A673 (cell line): ENCODE measurements at regions of chr6 and their contacts with region 1.

Region 1: DNA sequence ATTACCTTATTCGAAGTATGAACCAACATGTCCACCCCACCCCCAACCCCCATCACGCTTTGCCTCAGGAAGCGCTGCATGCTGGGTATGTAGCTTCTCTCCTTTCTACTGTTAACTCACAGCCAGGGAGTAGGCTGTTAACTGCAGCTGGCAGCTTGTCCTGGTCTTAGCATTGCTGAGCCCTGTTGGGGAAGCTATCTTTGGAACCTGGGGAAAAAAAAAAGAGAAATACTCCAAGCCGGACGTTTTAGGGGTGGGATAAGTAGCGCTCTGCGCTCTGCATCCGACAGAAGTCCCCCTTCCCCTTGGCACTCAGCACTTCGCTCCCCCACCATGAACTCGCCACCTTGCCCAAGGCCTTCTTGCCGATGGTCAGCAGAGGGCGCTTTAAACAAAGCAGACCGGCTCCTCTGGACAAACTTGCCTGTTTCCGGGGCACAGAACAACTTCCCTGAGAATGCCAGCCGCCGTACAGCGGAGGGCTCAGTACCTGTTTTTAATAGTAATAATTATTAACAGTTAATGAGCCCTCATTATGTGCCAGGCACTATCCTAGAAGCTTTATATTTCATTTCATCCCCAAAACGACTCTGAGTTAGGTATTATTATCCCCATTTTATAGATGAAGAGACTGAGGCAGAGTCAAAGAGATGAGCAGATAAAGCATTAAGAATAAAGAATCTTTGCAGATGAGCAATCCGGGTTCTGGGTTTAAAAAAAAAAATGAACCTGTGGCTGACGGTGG is 35.2 kb upstream of the MDFI start:
- DNase-seq: peak; percentile 93
- H3K4me3 ChIP-seq: peak overlapping the region; percentile 10
- H3K27ac ChIP-seq: peak overlapping the region; percentile 26
- H3K4me1 ChIP-seq: peaks cover 11% of the 10 kb centered on the region
- H3K27me3 ChIP-seq: no peaks in the 10 kb centered on the region
- CTCF ChIP-seq: peak; percentile 98

Region 2: DNA sequence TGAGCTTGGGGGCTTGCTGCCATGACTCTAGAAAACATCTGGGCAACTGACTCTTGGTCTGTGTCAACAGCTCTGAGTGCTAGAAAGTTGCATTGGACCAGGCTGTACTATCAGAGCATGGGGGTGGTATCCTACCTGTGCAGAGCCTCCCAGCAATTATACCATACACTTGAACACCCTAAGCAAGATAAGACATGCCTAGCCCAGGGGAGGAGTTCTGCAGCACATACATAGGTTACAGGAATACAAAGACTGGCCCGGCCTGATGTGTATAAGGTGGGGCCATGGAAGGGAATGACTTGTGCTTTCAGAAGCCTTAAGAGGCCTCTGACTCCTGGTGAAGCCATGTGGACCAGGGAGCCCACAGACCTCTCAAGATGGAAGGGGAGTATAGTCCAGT is 1657.4 kb before region 1 on chr6:
- CTCF ChIA-PET with region 1: no interaction called
- POLR2A ChIA-PET with region 1: no interaction called
- intact Hi-C with region 1: no loop called
- DNase-seq: no peak
- H3K4me3 ChIP-seq: no peak overlapping the region
- H3K27ac ChIP-seq: no peak overlapping the region
- H3K4me1 ChIP-seq: no peaks in the 10 kb centered on the region
- H3K27me3 ChIP-seq: peaks cover under 1% of the 10 kb centered on the region
- CTCF ChIP-seq: no peak

Region 3: DNA sequence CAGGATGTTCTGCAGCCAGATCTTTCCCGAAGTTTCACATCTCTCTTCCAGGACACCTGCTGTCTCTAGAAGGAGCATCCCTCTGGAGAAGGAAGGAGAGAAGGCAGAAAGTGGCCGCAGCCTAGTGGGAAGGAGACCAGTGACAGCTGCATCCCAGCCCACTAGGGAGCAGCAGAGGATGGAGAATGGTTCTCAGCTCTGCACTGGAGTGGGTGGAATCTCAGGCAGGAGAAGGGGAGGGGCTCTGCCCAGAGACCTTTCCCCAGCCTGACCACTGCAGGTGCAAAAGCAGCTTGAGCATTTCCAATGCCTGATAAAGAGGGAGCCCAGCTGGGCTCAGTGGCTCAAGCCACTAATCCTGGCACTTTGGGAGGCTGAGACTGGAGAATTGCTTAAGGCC is 235.3 kb before region 1 on chr6:
- CTCF ChIA-PET with region 1: interaction called, 15 read pairs
- POLR2A ChIA-PET with region 1: no interaction called
- intact Hi-C with region 1: no loop called
- DNase-seq: peak; percentile 77
- H3K4me3 ChIP-seq: no peak overlapping the region
- H3K27ac ChIP-seq: no peak overlapping the region
- H3K4me1 ChIP-seq: peaks cover 11% of the 10 kb centered on the region
- H3K27me3 ChIP-seq: no peaks in the 10 kb centered on the region
- CTCF ChIP-seq: peak; percentile 82

Region 4: GRCh38 chr6:41836022-41836659 is 233.1 kb after region 1 on chr6:
- CTCF ChIA-PET with region 1: no interaction called
- POLR2A ChIA-PET with region 1: no interaction called
- intact Hi-C with region 1: no loop called
- DNase-seq: no peak
- H3K4me3 ChIP-seq: no peak overlapping the region
- H3K27ac ChIP-seq: no peak overlapping the region
- H3K4me1 ChIP-seq: no peaks in the 10 kb centered on the region
- H3K27me3 ChIP-seq: no peaks in the 10 kb centered on the region
- CTCF ChIP-seq: no peak